ENCODE measurements at regions of chr4 and their contacts with region 1.

Region 1: DNA sequence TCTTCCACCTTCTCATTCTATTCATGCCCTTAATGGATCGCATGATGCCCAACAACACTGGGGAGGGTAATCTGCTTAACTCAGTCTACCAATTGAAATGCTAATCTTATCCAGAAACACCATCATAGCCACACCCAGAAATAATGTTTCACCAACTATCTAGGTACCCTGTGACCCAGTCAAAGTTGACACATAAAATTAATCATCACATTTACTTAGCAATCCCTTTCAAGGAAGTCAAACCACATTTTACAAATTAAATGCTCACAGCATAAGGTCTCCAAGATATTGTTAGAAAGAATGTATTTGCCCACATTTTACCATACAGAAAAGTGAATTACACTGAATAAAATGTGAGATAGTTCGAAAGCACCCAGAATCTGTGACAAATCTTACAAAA is 92.5 kb downstream of the PRSS12 start:
- DNase-seq: no peak
- CTCF ChIP-seq: no peak

Region 2: DNA sequence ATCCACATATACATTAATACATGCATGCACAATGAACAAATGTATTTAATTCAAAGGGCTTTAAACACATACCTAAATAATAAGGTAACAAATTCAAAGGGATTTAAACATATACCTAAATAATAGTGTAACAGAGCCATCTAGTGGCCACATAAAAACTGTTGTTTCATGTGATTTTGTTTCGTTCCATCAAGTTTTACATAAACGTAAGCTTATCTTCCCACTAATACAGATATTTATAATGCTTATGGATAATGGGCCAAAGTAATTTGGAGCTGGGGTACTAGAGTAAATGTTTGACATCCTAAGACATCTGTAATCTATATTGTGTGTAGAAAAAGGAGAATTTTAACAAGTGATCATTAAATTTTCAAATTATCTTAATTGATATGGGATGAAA is 10.2 kb after region 1 on chr4:
- CTCF ChIA-PET with region 1: interaction called, 13 read pairs
- POLR2A ChIA-PET with region 1: no interaction called
- DNase-seq: peak; percentile 30
- CTCF ChIP-seq: peak; percentile 61